ENCODE measurements at regions of chr2 and their contacts with region 1.

Region 1: GRCh38 chr2:163778044-163778781 is 42.4 kb upstream of the FIGN start:
- DNase-seq: no peak
- H3K4me3 ChIP-seq: no peak overlapping the region
- H3K4me3 Mint-ChIP-seq: no peak overlapping the region
- H3K27ac ChIP-seq: no peak overlapping the region
- H3K27ac Mint-ChIP-seq: no peak overlapping the region
- H3K4me1 ChIP-seq: no peaks in the 10 kb centered on the region
- H3K4me1 Mint-ChIP-seq: no peaks in the 10 kb centered on the region
- H3K27me3 ChIP-seq: no peaks in the 10 kb centered on the region
- H3K27me3 Mint-ChIP-seq: no peaks in the 10 kb centered on the region

Region 2: DNA sequence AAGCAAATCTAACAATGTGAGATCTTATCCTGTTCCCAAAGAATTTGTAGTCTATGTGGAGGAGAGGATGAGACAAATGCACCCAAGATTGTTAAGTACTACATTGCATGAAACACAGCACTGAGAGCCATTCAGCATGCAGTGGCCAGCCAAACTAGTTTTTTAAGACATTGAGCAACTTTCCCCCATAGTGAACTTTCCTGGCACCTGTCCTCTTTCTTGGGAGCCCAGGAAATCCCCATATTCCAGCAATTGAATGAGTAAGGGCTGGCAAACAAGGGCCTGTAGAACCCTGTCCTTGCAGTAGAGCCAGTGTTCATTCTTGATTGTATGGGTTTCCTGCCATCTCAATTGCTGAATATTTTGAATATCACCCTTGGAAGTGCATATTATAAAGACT is 16.4 kb after region 1 on chr2:
- CTCF ChIA-PET with region 1: no interaction called
- POLR2A ChIA-PET with region 1: no interaction called
- intact Hi-C with region 1: loop called (anchors 1 kb)
- DNase-seq: no peak
- H3K4me3 ChIP-seq: no peak overlapping the region
- H3K4me3 Mint-ChIP-seq: no peak overlapping the region
- H3K27ac ChIP-seq: no peak overlapping the region
- H3K27ac Mint-ChIP-seq: no peak overlapping the region
- H3K4me1 ChIP-seq: no peaks in the 10 kb centered on the region
- H3K4me1 Mint-ChIP-seq: no peaks in the 10 kb centered on the region
- H3K27me3 ChIP-seq: no peaks in the 10 kb centered on the region
- H3K27me3 Mint-ChIP-seq: no peaks in the 10 kb centered on the region

Region 3: DNA sequence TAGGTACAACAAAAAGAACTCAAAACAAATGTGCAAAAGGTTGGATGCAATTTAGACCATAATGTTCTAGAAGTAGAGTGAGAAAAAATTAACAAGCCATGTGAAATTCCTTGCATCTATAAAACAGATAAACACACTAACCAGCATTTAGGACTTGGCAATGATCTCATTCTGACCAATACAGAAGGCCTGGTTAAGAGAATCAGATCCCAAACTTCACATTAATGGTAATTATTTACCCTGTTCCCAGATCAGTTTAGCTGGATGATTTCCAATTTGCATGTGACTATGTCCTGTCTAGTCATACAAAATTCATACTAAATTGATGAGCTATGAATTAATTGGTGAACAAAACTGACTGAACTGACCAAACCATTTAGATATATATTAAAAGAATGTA is 56.0 kb after region 1 on chr2:
- CTCF ChIA-PET with region 1: no interaction called
- POLR2A ChIA-PET with region 1: no interaction called
- intact Hi-C with region 1: no loop called
- DNase-seq: no peak
- H3K4me3 ChIP-seq: no peak overlapping the region
- H3K4me3 Mint-ChIP-seq: no peak overlapping the region
- H3K27ac ChIP-seq: no peak overlapping the region
- H3K27ac Mint-ChIP-seq: no peak overlapping the region
- H3K4me1 ChIP-seq: no peaks in the 10 kb centered on the region
- H3K4me1 Mint-ChIP-seq: no peaks in the 10 kb centered on the region
- H3K27me3 ChIP-seq: no peaks in the 10 kb centered on the region
- H3K27me3 Mint-ChIP-seq: no peaks in the 10 kb centered on the region